ENCODE measurements at regions of chr1 and their contacts with region 1.

Region 1: DNA sequence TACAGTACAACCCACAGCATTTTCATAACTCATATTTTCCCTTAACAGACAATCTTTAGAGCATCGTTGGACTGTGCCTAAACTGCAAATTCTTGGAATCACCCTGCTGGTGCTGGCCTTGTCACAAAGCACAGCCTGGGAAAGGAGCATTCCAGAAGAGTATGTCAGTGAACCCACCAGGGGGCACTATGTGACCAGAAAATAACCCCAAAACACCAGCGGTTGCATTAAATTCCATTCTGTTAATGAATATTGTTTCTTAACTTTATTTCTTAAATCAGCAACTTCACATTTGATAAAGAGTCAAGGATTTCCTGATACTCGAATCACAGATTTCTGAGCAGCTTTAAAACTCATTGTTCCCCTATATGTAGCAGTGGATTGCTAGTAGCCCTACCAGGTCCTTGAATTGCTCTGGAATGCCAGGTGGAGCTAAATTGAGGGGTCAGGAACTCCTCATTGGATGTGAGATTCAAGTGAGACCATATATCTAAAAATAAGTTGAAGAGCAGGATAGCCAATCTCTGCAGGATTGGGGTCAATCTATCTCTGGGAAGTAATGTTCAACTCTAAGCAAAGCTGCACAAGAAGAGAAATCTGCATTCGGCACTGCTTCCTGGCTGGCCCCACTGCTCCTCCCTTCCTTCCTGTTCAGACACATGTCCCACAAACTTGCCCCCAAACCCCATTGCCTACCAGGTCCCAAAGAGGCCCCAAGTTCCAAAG is 12.7 kb upstream of the RAB4A start:
- DNase-seq: peak; percentile 85
- ATAC-seq: peak; percentile 87
- H3K4me3 ChIP-seq: no peak overlapping the region
- H3K27ac ChIP-seq: no peak overlapping the region
- H3K4me1 ChIP-seq: no peaks in the 10 kb centered on the region
- H3K27me3 ChIP-seq: no peaks in the 10 kb centered on the region
- CTCF ChIP-seq: peak; percentile 95

Region 2: DNA sequence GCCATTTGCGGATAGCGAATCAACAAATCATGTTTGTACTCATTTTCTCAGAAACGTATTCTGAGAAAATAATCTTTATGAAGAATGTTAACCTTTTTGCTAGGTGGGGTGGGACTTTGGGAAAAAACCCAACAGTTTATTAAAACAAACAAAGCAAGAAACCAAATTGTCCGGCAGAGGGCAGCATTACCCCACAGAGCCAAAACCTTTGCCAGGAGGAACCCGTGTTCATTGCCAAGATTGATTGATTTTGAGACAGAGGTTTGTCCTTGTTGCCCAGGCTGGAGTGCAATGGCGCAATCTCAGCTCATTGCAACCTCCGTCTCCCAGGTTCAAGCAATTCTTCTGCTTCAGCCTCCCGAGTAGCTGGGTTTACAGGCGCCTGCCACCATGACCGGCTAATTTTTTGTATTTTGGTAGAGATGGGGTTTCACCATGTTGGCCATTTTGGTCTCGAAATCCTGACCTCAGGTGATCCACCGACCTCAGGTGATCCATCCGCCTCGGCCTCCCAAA is 593.7 kb before region 1 on chr1:
- CTCF ChIA-PET with region 1: interaction called, 6 read pairs
- POLR2A ChIA-PET with region 1: no interaction called
- intact Hi-C with region 1: loop called (anchors 1 kb)
- DNase-seq: peak; percentile 92
- ATAC-seq: peak; percentile 64
- H3K4me3 ChIP-seq: peak overlapping the region; percentile 40
- H3K27ac ChIP-seq: no peak overlapping the region
- H3K4me1 ChIP-seq: peaks cover 4% of the 10 kb centered on the region; the same call in 1 of the 2 replicates
- H3K27me3 ChIP-seq: no peaks in the 10 kb centered on the region
- CTCF ChIP-seq: peak; percentile 89

Region 3: DNA sequence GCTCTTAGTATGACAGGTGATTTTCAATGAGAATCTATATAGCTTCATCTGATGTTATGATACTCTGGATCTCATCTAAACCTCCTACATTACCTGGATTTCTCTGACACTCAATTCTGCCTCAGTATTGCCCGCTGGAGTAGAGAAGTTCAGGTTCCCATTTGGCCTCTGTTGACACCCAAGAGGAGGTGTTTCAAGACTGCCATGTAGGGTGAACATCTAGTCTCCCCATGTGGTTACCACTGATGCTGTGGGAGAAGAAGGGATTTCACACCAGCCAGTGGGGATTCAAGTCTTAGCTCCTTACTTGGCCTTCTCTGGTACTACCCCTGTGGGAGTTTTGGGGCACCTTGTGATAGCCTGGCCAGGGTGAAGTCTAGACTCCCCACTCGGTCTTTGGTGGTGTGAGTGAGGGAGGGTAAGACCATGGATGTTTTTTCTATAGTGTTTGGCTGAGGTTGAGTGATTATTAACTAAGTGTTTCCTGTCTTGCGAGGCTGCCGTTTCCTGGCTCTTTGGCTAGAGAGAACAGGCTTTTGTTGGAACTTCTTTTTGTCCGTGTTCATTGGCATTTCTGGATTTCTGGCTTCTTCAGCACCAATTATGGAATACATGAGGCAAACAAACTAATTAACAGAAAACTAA is 432.2 kb before region 1 on chr1:
- CTCF ChIA-PET with region 1: no interaction called
- POLR2A ChIA-PET with region 1: no interaction called
- intact Hi-C with region 1: no loop called
- DNase-seq: no peak
- ATAC-seq: no peak
- H3K4me3 ChIP-seq: no peak overlapping the region
- H3K27ac ChIP-seq: no peak overlapping the region
- H3K4me1 ChIP-seq: peaks cover 15% of the 10 kb centered on the region
- H3K27me3 ChIP-seq: peaks cover 63% of the 10 kb centered on the region
- CTCF ChIP-seq: no peak

Region 4: DNA sequence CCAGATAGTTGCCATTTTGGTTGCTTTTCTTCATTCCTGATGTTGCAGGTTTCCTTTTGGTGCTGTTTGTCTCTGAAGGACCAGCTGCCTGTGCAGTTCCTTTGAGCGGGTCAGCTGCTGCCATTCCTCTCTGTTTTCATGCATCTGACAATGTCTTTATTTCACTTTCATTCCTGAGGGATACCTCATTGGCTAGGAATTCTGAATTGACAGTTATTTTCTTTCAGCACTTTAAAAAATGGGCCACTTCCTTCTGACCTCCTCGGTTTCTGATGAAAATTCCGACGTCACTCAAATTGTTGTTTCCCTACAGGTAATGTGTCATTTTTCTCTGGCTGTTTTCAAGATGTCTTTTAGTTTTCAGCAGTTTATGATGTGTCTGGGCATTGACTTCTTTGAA is 59.9 kb after region 1 on chr1:
- CTCF ChIA-PET with region 1: no interaction called
- POLR2A ChIA-PET with region 1: no interaction called
- intact Hi-C with region 1: loop called (anchors 1 kb)
- DNase-seq: no peak
- ATAC-seq: no peak
- H3K4me3 ChIP-seq: no peak overlapping the region
- H3K27ac ChIP-seq: no peak overlapping the region
- H3K4me1 ChIP-seq: no peaks in the 10 kb centered on the region
- H3K27me3 ChIP-seq: no peaks in the 10 kb centered on the region
- CTCF ChIP-seq: no peak

Region 5: GRCh38 chr1:229452956-229453801 is 195.0 kb after region 1 on chr1:
- CTCF ChIA-PET with region 1: interaction called, 6 read pairs
- POLR2A ChIA-PET with region 1: no interaction called
- intact Hi-C with region 1: loop called (anchors 1 kb)
- DNase-seq: peak; percentile 52
- ATAC-seq: peak; percentile 67
- H3K4me3 ChIP-seq: no peak overlapping the region
- H3K27ac ChIP-seq: no peak overlapping the region
- H3K4me1 ChIP-seq: 0 out of 2 replicates have a peak, but pooled peaks cover 3% of the 10 kb centered on the region
- H3K27me3 ChIP-seq: no peaks in the 10 kb centered on the region
- CTCF ChIP-seq: peak; percentile 85

Region 6: DNA sequence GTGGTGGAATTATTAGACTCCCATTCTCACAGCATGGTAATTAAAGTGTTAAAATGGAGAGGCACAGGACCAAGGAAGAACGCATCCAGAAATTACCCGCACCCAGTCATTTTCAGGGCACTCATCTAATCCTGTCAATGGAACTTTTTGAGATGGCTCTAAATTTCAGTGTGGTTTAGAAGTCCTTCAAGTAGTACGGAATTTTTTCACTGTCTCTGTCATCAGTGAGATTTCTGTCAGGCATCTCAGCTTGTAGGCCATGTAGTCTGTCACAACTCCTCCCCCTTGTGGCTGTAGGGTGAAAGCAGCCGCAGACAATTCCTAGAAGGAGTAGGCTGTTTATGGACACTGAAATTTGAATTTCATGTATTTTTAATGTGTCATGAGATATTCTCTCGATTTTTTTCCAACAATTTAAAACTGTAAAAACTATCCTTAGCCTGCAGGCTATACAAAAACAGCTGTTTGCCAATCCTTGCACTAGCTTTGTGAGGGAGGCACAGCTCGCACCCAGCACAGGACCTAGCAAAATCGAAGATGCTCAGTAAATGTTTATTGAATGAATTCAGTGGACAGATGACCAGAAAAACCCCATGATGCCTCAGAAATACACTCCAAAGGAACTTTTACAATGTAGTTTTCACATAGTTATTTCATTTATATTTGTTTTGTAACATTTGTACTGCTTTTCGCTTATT is 256.5 kb after region 1 on chr1:
- CTCF ChIA-PET with region 1: no interaction called
- POLR2A ChIA-PET with region 1: no interaction called
- intact Hi-C with region 1: loop called (anchors 1 kb)
- DNase-seq: peak; percentile 82
- ATAC-seq: peak; percentile 99
- H3K4me3 ChIP-seq: no peak overlapping the region
- H3K27ac ChIP-seq: no peak overlapping the region
- H3K4me1 ChIP-seq: peaks cover 6% of the 10 kb centered on the region
- H3K27me3 ChIP-seq: no peaks in the 10 kb centered on the region
- CTCF ChIP-seq: peak; percentile 91